CD14-positive monocyte (primary cell): ENCODE measurements at regions of chr11 and their contacts with region 1.

Region 1: GRCh38 chr11:95150946-95151684 is 61.5 kb downstream of the ENDOD1 start:
- DNase-seq: peak; percentile 78 to 84 (median 78)
- H3K4me3 ChIP-seq: peak overlapping the region; percentile 67 to 89 (median 75)
- H3K4me3 Mint-ChIP-seq: peak overlapping the region; percentile 96 to 97
- H3K27ac ChIP-seq: peak overlapping the region; percentile 34 to 77
- H3K27ac Mint-ChIP-seq: peak overlapping the region; percentile 76 to 93 (median 83)
- H3K4me1 ChIP-seq: peaks cover 22 to 33% of the 10 kb centered on the region in 2 donors
- H3K4me1 Mint-ChIP-seq: peaks cover 35% of the 10 kb centered on the region
- H3K27me3 ChIP-seq: peaks cover 0 to 6% of the 10 kb centered on the region in 2 donors
- H3K27me3 Mint-ChIP-seq: peaks cover 2 to 16% (median 4%) of the 10 kb centered on the region in 3 donors
- CTCF ChIP-seq: peak; percentile 90

Region 2: DNA sequence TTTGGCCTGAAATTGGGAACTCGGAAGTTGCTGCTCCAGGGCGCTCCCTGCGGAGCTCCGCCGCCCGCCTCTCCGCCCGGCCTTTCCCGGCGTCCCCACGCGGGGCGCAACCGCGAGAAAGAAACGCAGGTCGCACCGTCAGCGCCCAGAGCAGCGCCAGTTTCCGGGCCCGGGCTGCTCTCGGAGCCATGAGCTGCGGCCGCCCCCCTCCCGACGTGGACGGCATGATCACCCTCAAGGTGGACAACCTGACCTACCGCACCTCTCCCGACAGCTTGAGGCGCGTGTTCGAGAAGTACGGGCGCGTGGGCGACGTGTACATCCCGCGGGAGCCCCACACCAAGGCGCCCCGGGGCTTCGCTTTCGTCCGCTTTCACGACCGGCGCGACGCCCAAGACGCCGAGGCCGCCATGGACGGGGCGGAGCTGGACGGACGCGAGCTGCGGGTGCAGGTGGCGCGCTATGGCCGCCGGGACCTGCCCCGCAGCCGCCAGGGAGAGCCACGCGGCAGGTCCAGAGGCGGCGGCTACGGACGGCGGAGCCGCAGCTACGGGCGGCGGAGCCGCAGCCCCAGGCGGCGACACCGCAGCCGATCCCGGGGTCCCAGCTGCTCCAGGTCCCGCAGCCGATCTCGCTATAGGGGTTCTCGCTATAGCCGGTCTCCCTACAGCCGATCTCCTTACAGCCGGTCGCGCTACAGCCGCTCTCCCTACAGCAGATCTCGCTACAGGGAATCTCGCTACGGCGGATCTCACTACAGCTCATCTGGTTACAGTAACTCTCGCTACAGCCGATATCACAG is 83.9 kb before region 1 on chr11:
- intact Hi-C with region 1: loop called (anchors 2 to 5 kb)
- DNase-seq: peak; percentile 55 to 66 (median 64)
- H3K4me3 ChIP-seq: peak overlapping the region; percentile 80 to 93 (median 90)
- H3K4me3 Mint-ChIP-seq: peak overlapping the region; percentile 98 to 100
- H3K27ac ChIP-seq: peak overlapping the region; percentile 85 to 87
- H3K27ac Mint-ChIP-seq: peak overlapping the region; percentile 89 to 97 (median 93)
- H3K4me1 ChIP-seq: peaks cover 24 to 30% of the 10 kb centered on the region in 2 donors
- H3K4me1 Mint-ChIP-seq: peaks cover 27% of the 10 kb centered on the region
- H3K27me3 ChIP-seq: no peaks in the 10 kb centered on the region
- H3K27me3 Mint-ChIP-seq: peaks cover 0 to 2% (median 2%) of the 10 kb centered on the region in 3 donors
- CTCF ChIP-seq: peak; percentile 57

Region 3: GRCh38 chr11:95165638-95166037 is 14.5 kb after region 1 on chr11:
- intact Hi-C with region 1: no loop called
- DNase-seq: no peak
- H3K4me3 ChIP-seq: no peak overlapping the region
- H3K4me3 Mint-ChIP-seq: no peak overlapping the region
- H3K27ac ChIP-seq: no peak overlapping the region
- H3K27ac Mint-ChIP-seq: peak overlapping the region in 1 of 7 donors; percentile 38
- H3K4me1 ChIP-seq: no peaks in the 10 kb centered on the region
- H3K4me1 Mint-ChIP-seq: peaks cover 7% of the 10 kb centered on the region
- H3K27me3 ChIP-seq: no peaks in the 10 kb centered on the region
- H3K27me3 Mint-ChIP-seq: no peaks in the 10 kb centered on the region
- CTCF ChIP-seq: no peak

Region 4: GRCh38 chr11:95182397-95182796 is 31.3 kb after region 1 on chr11:
- intact Hi-C with region 1: no loop called
- DNase-seq: no peak
- H3K4me3 ChIP-seq: no peak overlapping the region
- H3K4me3 Mint-ChIP-seq: no peak overlapping the region
- H3K27ac ChIP-seq: peak overlapping the region in 1 of 2 donors; percentile 59
- H3K27ac Mint-ChIP-seq: peak overlapping the region in 2 of 7 donors; percentile 19 to 80
- H3K4me1 ChIP-seq: no peaks in the 10 kb centered on the region
- H3K4me1 Mint-ChIP-seq: no peaks in the 10 kb centered on the region
- H3K27me3 ChIP-seq: no peaks in the 10 kb centered on the region
- H3K27me3 Mint-ChIP-seq: no peaks in the 10 kb centered on the region
- CTCF ChIP-seq: no peak

Region 5: GRCh38 chr11:95231127-95231880 is 80.2 kb after region 1 on chr11 and contains the start of gene SESN3:
- intact Hi-C with region 1: loop called in 1 of 2 experiments (anchors 5 kb)
- DNase-seq: peak; percentile 98
- H3K4me3 ChIP-seq: peak within 1 kb of the TSS; percentile 73 to 91 (median 90)
- H3K4me3 Mint-ChIP-seq: peak within 1 kb of the TSS in 1 of 2 donors; percentile 98
- H3K27ac ChIP-seq: peak within 1 kb of the TSS; percentile 83 to 92
- H3K27ac Mint-ChIP-seq: peak within 1 kb of the TSS; percentile 77 to 93 (median 87)
- H3K4me1 ChIP-seq: peaks cover 32 to 55% of the 10 kb centered on the region in 2 donors
- H3K4me1 Mint-ChIP-seq: peaks cover 29% of the 10 kb centered on the region
- H3K27me3 ChIP-seq: no peaks in the 10 kb centered on the region
- H3K27me3 Mint-ChIP-seq: no peaks in the 10 kb centered on the region
- CTCF ChIP-seq: no peak
- polyA plus RNA-seq, gene SESN3: 1.1 to 7.4 (median 1.4) TPM

Region 6: DNA sequence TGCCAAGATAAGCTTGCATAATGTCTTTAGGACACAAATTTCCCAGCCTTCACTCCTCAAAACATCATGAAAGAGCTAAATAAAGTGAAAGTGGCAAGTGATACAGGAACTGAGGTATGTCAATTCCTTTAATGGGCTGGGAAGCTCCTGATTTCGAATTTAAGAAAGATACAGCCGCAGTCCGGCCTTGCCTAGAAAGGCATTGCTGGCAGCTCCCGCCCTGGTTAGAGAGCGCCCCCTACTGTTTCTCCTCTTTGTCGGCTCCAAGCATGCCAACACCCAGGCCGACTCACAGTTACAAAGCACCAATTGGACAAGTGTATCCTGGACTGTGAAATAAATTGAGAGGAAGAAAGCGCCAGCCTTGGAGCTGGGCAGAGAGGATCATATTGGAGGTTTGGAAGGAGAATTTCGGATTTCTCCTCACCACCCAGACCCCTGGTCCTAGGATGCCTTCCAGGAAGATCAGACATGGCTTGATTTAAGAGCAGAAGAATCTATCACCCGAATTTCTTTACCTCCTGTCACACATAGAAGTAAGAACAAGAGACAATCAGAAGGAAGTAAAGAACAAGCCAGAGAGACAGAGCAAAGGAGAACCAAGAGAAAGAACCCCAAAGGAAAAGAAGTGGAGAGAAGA is 554.5 kb after region 1 on chr11:
- intact Hi-C with region 1: loop called (anchors 2 to 5 kb)
- DNase-seq: peak; percentile 68 to 78 (median 77)
- H3K4me3 ChIP-seq: no peak overlapping the region
- H3K4me3 Mint-ChIP-seq: no peak overlapping the region
- H3K27ac ChIP-seq: no peak overlapping the region
- H3K27ac Mint-ChIP-seq: no peak overlapping the region
- H3K4me1 ChIP-seq: peaks cover 0 to 2% of the 10 kb centered on the region in 2 donors
- H3K4me1 Mint-ChIP-seq: no peaks in the 10 kb centered on the region
- H3K27me3 ChIP-seq: no peaks in the 10 kb centered on the region
- H3K27me3 Mint-ChIP-seq: peaks cover 0 to 2% (median 1%) of the 10 kb centered on the region in 3 donors
- CTCF ChIP-seq: peak; percentile 86

Region 7: DNA sequence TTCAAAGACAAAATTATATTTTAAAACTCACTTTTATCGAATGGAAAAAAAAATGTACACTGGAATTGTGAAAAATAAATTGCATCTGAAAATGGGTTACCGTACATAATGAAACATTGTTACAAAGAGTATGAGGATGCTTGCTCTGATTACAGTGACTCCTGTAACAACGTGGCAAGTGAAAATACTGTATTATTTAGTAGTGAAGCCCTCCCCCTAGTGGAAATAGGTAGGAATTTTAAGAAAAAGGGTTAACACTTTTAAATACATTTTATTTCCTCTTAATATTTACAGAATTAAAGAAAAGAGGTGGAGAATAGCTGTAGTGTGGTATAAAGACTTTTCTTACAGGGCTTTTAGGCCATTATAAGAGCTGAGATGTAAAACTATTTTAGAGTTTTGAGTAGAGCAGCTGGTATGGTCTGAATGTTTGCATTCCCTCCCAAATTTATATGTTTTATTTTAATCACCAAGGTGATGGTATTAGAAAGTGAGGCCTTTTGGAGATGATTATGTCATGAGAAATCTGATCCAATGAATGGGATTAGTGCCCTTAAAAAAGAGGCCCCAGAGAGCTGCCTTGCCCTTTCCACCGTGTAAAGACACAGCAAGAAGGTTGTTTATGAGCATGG is 613.3 kb after region 1 on chr11:
- intact Hi-C with region 1: loop called (anchors 2 to 5 kb)
- DNase-seq: peak; percentile 27 to 55 (median 42)
- H3K4me3 ChIP-seq: no peak overlapping the region
- H3K4me3 Mint-ChIP-seq: no peak overlapping the region
- H3K27ac ChIP-seq: no peak overlapping the region
- H3K27ac Mint-ChIP-seq: no peak overlapping the region
- H3K4me1 ChIP-seq: peaks cover 16 to 19% of the 10 kb centered on the region in 2 donors
- H3K4me1 Mint-ChIP-seq: peaks cover 17% of the 10 kb centered on the region
- H3K27me3 ChIP-seq: no peaks in the 10 kb centered on the region
- H3K27me3 Mint-ChIP-seq: peaks cover 0 to 2% (median 1%) of the 10 kb centered on the region in 3 donors
- CTCF ChIP-seq: peak; percentile 82